ENCODE measurements at regions of chr12 and their contacts with region 1.

Region 1: GRCh38 chr12:39443081-39443928 is at the start of gene KIF21A:
- DNase-seq: peak; percentile 89
- ATAC-seq: peak; percentile 94
- H3K4me3 ChIP-seq: peak within 1 kb of the TSS; percentile 80 to 95 (median 93)
- H3K27ac ChIP-seq: peak within 1 kb of the TSS; percentile 100
- H3K4me1 ChIP-seq: peaks cover 36% of the 10 kb centered on the region
- H3K27me3 ChIP-seq: no peaks in the 10 kb centered on the region; a peak in 1 of 5 replicates
- CTCF ChIP-seq: peak; percentile 58
- EP300 ChIP-seq: peak; percentile 13 to 32; a peak in 3 of 4 replicates
- POLR2A ChIP-seq: peak; percentile 91 to 95
- RAD21 ChIP-seq: peak; percentile 81
- total RNA-seq, gene KIF21A: 39.7 and 55.9 TPM in 2 replicates

Region 2: DNA sequence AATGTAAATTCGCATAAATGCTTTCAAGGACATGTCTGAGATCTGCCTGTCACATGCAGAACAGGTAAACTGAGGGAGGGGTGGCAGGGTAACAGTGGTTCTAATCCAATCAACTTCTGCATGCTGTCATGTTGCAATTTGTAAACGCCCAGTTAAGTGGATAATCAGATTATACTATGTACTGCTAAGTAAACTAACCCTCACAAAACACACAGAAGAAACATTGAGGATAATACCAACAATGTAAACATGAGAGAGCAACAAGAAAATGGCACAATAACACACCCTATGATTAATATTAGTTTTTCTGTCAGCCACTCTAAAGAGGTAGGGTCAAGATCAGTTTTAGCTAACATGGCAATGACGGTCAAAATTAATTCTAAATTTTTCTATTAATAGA is 124.1 kb before region 1 on chr12:
- CTCF ChIA-PET with region 1: interaction called, 6 read pairs
- POLR2A ChIA-PET with region 1: no interaction called
- in situ Hi-C with region 1: no loop called
- intact Hi-C with region 1: loop called (anchors 2 kb)
- DNase-seq: no peak
- ATAC-seq: peak; percentile 39; the same call in 1 of the 3 replicates
- H3K4me3 ChIP-seq: no peak overlapping the region
- H3K27ac ChIP-seq: no peak overlapping the region
- H3K4me1 ChIP-seq: 0 out of 2 replicates have a peak, but pooled peaks cover 5% of the 10 kb centered on the region
- H3K27me3 ChIP-seq: no peaks in the 10 kb centered on the region
- CTCF ChIP-seq: no peak
- EP300 ChIP-seq: no peak
- POLR2A ChIP-seq: no peak
- RAD21 ChIP-seq: no peak

Region 3: GRCh38 chr12:39417916-39418494 is 25.3 kb before region 1 on chr12:
- CTCF ChIA-PET with region 1: no interaction called
- POLR2A ChIA-PET with region 1: interaction called, 16 read pairs
- in situ Hi-C with region 1: no loop called
- intact Hi-C with region 1: no loop called
- DNase-seq: peak; percentile 66
- ATAC-seq: peak; percentile 93
- H3K4me3 ChIP-seq: no peak overlapping the region
- H3K27ac ChIP-seq: peak overlapping the region; percentile 30
- H3K4me1 ChIP-seq: peaks cover 17% of the 10 kb centered on the region
- H3K27me3 ChIP-seq: no peaks in the 10 kb centered on the region; a peak in 1 of 5 replicates
- CTCF ChIP-seq: no peak
- EP300 ChIP-seq: no peak
- POLR2A ChIP-seq: no peak
- RAD21 ChIP-seq: no peak

Region 4: DNA sequence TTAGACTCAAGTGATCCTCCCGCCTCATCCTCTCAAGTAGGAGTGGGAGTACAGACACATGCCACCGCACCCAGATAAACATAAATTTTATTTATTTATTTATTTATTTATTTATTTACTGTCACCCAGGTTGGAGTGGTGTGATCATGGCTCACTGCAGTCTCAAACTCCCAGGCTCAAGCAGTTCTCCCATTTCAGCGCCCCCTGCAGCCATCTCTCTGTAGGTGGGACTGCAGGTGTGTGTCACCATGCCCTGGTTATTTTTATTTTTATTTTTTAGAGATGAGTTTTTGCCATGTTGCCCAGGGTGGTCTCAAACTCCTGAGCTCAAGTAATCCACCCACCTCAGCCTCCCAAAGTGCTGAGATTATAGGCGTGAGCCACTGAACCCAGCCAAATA is 32.8 kb after region 1 on chr12:
- CTCF ChIA-PET with region 1: no interaction called
- POLR2A ChIA-PET with region 1: interaction called, 4 read pairs
- in situ Hi-C with region 1: no loop called
- intact Hi-C with region 1: loop called (anchors 2 kb)
- DNase-seq: peak; percentile 6
- ATAC-seq: peak; percentile 69; the same call in 2 of the 3 replicates
- H3K4me3 ChIP-seq: no peak overlapping the region
- H3K27ac ChIP-seq: no peak overlapping the region
- H3K4me1 ChIP-seq: no peaks in the 10 kb centered on the region
- H3K27me3 ChIP-seq: no peaks in the 10 kb centered on the region
- CTCF ChIP-seq: no peak
- EP300 ChIP-seq: no peak
- POLR2A ChIP-seq: no peak
- RAD21 ChIP-seq: no peak

Region 5: DNA sequence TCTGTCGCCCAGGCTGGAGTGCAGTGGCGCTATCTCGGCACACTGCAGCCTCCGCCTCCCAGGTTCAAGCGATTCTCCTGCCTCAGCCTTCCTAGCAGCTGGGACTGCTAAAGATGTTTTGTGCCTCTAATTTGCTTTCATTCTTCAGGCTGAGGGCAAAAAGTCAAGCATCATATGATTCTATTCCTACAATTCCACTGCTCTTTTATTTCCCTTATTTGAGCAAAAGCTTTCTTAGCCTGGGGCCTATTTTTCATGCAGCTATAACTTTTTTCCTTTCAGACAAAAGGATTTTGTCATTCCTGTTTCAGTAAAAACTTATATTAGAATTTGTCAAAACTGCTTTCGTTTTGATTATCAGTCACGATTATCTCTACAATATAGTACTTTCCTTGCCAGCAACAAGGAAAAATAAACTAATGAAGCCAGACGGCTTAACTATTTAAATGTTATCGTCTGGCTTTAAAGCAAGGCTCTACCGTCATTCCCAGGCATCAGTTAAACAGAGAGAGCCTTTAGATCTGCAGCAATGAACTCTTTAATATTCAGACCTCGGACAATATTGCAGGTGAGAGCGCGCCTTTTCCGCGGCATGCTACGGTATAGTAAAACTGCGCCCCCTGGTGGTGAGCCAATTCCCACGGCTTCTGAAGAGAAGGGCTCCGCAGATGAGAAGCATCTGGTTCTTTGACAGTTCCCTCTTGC is 663.9 kb after region 1 on chr12:
- CTCF ChIA-PET with region 1: no interaction called
- POLR2A ChIA-PET with region 1: no interaction called
- in situ Hi-C with region 1: no loop called
- intact Hi-C with region 1: loop called (anchors 5 kb)
- DNase-seq: peak; percentile 63
- ATAC-seq: peak; percentile 26
- H3K4me3 ChIP-seq: peak overlapping the region in 2 of 3 experiments; percentile 14 to 78; a peak in 1 of 6 replicates
- H3K27ac ChIP-seq: no peak overlapping the region
- H3K4me1 ChIP-seq: peaks cover 45% of the 10 kb centered on the region
- H3K27me3 ChIP-seq: no peaks in the 10 kb centered on the region; a peak in 3 of 5 replicates
- CTCF ChIP-seq: peak; percentile 86
- EP300 ChIP-seq: no peak
- POLR2A ChIP-seq: no peak
- RAD21 ChIP-seq: peak; percentile 65

Region 6: DNA sequence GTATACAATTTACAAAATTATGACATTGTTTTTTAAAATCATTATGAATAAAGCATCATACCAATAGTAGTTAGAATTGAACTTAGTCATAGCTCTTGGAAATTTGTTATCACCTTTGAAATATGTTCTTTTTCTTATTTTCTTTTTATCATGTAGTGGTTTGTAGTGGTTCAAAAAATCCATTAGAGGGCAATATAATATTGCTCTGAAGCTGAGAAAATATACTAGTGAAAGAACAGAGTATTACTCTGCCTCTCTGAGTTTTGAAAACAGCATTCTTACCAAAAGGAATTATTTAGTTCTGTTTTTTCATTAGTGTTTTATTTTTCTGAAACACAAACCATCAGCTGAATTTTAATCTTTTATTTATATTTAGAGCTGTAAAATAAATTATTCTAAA is 1821.0 kb after region 1 on chr12:
- CTCF ChIA-PET with region 1: no interaction called
- POLR2A ChIA-PET with region 1: no interaction called
- in situ Hi-C with region 1: no loop called
- intact Hi-C with region 1: no loop called
- DNase-seq: peak; percentile 3
- ATAC-seq: no peak
- H3K4me3 ChIP-seq: no peak overlapping the region
- H3K27ac ChIP-seq: no peak overlapping the region
- H3K4me1 ChIP-seq: no peaks in the 10 kb centered on the region
- H3K27me3 ChIP-seq: no peaks in the 10 kb centered on the region
- CTCF ChIP-seq: no peak
- EP300 ChIP-seq: no peak
- POLR2A ChIP-seq: no peak
- RAD21 ChIP-seq: no peak

Measured in HepG2 (cell line).